Caki2 (cell line): ENCODE measurements at regions of chr12 and their contacts with region 1.

Region 1: GRCh38 chr12:49232940-49233841 is 31.7 kb upstream of the TUBA1C start:
- DNase-seq: no peak

Region 2: GRCh38 chr12:49069507-49070346 is 163.5 kb before region 1 on chr12 and contains the start of gene RHEBL1:
- in situ Hi-C with region 1: loop called (anchors 10 kb)
- DNase-seq: peak; percentile 99
- total RNA-seq, gene RHEBL1: 0.81 and 4.3 TPM in 2 replicates